Mammary epithelial cell (primary cell): ENCODE measurements at regions of chr2 and their contacts with region 1.

Region 1: GRCh38 chr2:219104107-219105035 is 43.6 kb upstream of the IHH start:
- DNase-seq: peak; percentile 52
- H3K4me3 ChIP-seq: no peak overlapping the region
- H3K27ac ChIP-seq: no peak overlapping the region
- H3K4me1 ChIP-seq: no peaks in the 10 kb centered on the region
- H3K27me3 ChIP-seq: no peaks in the 10 kb centered on the region
- CTCF ChIP-seq: peak; percentile 93 to 96

Region 2: GRCh38 chr2:218879881-218880748 is 224.3 kb before region 1 on chr2:
- CTCF ChIA-PET with region 1: no interaction called
- dilution Hi-C with region 1: no loop called
- in situ Hi-C with region 1: no loop called
- intact Hi-C with region 1: no loop called
- DNase-seq: no peak
- H3K4me3 ChIP-seq: peak overlapping the region; percentile 18 to 51 (median 39)
- H3K27ac ChIP-seq: no peak overlapping the region
- H3K4me1 ChIP-seq: peaks cover 36% of the 10 kb centered on the region
- H3K27me3 ChIP-seq: no peaks in the 10 kb centered on the region
- CTCF ChIP-seq: no peak

Region 3: DNA sequence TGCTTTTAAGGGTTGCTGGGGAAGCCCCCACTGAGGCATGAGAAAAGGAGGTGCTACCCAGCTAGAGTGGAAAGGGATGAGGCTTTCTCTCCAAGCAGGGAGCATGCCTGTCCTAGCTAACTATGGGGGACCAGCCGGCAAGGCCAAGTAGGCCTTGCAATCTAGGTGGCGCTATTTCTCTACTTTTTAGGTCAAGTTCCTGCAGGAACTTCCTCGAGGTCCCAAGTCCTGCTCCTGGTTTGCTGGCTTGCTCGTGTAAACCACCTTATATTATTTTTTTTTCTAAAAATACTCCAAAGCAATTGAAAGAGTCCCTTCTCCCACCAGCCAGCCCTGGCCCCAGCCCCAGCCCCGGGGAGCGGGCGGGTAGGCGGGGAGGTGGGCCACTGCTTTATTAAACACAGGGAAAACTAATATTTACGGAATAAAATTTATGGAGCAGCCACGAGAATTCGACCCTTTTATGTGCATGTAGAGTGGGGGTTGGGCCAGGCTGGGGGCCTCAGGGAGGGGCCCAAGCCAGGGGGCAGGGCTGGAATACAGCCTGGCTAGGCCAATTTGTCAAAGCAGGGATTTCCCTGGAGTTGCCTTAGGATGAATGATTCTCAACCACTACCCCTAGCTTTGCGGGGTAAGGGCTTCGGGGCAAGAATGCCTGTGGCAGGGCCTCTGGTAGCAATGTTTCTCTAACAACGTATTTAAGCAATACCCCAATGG is 30.8 kb before region 1 on chr2:
- CTCF ChIA-PET with region 1: interaction called, 8 read pairs
- dilution Hi-C with region 1: no loop called
- in situ Hi-C with region 1: no loop called
- intact Hi-C with region 1: loop called (anchors 1 kb)
- DNase-seq: peak; percentile 41
- H3K4me3 ChIP-seq: no peak overlapping the region
- H3K27ac ChIP-seq: no peak overlapping the region
- H3K4me1 ChIP-seq: peaks cover 10% of the 10 kb centered on the region
- H3K27me3 ChIP-seq: no peaks in the 10 kb centered on the region
- CTCF ChIP-seq: peak; percentile 57 to 74

Region 4: DNA sequence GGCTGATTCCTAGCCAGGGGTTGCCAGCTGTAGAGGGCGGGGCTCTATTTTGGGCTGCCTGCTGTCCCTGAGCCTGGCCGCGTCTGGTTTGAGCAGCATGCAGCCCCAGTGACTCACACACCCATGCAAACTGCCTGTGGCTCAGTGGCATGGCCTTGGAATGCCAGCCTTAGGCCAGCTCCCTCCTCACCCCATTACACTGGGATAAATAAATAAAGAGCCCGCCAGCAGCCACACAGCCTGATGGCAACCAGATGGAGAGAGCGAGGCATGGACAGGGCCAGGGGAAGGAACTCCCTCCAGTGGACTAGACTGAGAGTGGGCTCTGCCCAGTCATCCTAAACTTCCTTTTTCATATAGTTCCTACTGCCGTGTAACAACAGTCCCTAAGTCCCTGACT is 38.0 kb after region 1 on chr2:
- CTCF ChIA-PET with region 1: no interaction called
- dilution Hi-C with region 1: loop called (anchors 5 kb)
- in situ Hi-C with region 1: no loop called
- intact Hi-C with region 1: no loop called
- DNase-seq: peak; percentile 77
- H3K4me3 ChIP-seq: no peak overlapping the region
- H3K27ac ChIP-seq: no peak overlapping the region
- H3K4me1 ChIP-seq: peaks cover 11% of the 10 kb centered on the region
- H3K27me3 ChIP-seq: no peaks in the 10 kb centered on the region
- CTCF ChIP-seq: peak in 1 of 2 donors; percentile 12